ENCODE measurements at regions of chr5 and their contacts with region 1.

Region 1: DNA sequence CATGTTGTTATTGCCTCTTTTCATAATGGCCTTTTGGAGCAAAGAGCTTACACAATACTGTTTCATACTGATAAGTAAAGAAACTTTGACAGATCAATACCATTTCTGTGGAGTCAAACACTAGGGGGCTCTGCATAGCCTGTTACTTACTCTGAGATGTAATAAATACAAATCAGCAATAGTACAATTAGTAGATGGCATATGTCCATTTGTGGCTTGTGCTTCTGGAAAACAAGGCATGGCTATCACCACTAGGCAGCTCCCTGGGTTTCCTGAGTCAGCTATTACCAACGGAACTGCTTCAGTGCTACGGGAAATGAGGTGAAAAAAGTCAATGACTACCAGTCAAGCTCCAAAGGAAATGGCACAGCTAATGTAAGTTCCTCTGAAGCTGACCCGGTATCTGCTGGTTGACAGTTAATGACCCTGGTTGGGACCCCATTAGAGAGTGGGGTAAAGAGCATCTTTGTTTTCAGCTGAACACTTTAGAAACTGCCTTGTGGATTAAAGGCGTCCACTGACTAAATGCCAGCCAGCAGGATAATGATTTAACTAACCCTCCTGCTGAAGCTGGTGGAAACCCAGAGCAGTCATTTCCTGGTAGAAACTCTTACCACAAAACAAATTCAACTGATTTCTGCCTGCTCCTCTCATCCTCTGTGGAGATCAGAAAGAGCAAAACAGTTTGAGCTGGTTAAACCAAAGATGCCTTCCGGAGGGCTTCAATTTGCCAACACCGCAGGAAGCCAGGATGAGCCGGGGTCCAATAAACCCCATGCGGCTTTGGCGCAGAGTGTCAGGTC is 69.0 kb upstream of the FAM169A start:
- DNase-seq: peak in 8 of 9 donors; percentile 14 to 65 (median 44)
- ATAC-seq: peak; percentile 79
- H3K4me3 ChIP-seq: peak overlapping the region; percentile 34
- H3K4me3 Mint-ChIP-seq: peak overlapping the region; percentile 65 to 84 (median 76)
- H3K27ac ChIP-seq: peak overlapping the region; percentile 50
- H3K27ac Mint-ChIP-seq: peak overlapping the region; percentile 52 to 89 (median 85)
- H3K4me1 ChIP-seq: peaks cover 9 to 20% of the 10 kb centered on the region in 2 donors
- H3K4me1 Mint-ChIP-seq: peaks cover 13 to 50% (median 42%) of the 10 kb centered on the region in 7 donors
- H3K27me3 ChIP-seq: no peaks in the 10 kb centered on the region
- H3K27me3 Mint-ChIP-seq: peaks cover 0 to 6% (median 0%) of the 10 kb centered on the region in 5 donors

Region 2: DNA sequence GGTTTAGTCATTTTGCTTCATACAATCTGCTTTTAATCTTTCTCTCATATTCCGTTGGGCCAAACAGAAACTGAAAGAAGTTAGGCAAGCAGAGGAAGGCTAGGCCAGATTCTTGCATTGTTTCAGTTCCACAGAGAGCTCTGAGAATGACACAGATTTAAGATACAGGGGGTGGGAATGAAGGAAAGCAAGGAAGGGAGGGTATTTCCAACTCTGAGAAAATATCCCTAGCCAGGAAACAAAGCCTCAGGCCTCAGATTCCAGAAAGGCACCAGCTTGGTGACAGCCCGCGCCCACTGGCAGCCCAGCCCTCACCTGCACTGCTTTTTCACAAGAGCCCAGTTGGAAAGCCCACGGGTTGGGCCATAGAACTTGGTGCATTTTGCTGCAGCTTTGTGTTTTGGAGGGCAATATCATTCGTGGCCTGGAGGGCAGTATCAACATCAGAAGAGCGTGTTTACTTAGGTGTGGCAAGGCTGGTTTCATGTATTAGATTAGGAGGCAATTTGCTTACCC is 358.2 kb before region 1 on chr5:
- CTCF ChIA-PET with region 1: no interaction called
- POLR2A ChIA-PET with region 1: no interaction called
- intact Hi-C with region 1: loop called in 1 of 2 experiments (anchors 2 kb)
- DNase-seq: peak in 7 of 9 donors; percentile 6 to 43 (median 24)
- ATAC-seq: peak; percentile 41
- H3K4me3 ChIP-seq: peak overlapping the region; percentile 48
- H3K4me3 Mint-ChIP-seq: peak overlapping the region; percentile 41 to 92 (median 71)
- H3K27ac ChIP-seq: peak overlapping the region; percentile 8
- H3K27ac Mint-ChIP-seq: peak overlapping the region; percentile 51 to 97 (median 81)
- H3K4me1 ChIP-seq: peaks cover 21 to 22% of the 10 kb centered on the region in 2 donors
- H3K4me1 Mint-ChIP-seq: peaks cover 10 to 51% (median 30%) of the 10 kb centered on the region in 7 donors
- H3K27me3 ChIP-seq: no peaks in the 10 kb centered on the region
- H3K27me3 Mint-ChIP-seq: peaks cover 0 to 12% (median 0%) of the 10 kb centered on the region in 5 donors

Region 3: GRCh38 chr5:74916831-74917710 is 18.1 kb before region 1 on chr5:
- CTCF ChIA-PET with region 1: no interaction called
- POLR2A ChIA-PET with region 1: no interaction called
- intact Hi-C with region 1: no loop called
- DNase-seq: no peak
- ATAC-seq: no peak
- H3K4me3 ChIP-seq: no peak overlapping the region
- H3K4me3 Mint-ChIP-seq: no peak overlapping the region
- H3K27ac ChIP-seq: no peak overlapping the region
- H3K27ac Mint-ChIP-seq: no peak overlapping the region
- H3K4me1 ChIP-seq: no peaks in the 10 kb centered on the region
- H3K4me1 Mint-ChIP-seq: no peaks in the 10 kb centered on the region
- H3K27me3 ChIP-seq: no peaks in the 10 kb centered on the region
- H3K27me3 Mint-ChIP-seq: peaks cover 0 to 9% (median 5%) of the 10 kb centered on the region in 5 donors

Region 4: GRCh38 chr5:74974451-74975091 is 39.4 kb after region 1 on chr5:
- CTCF ChIA-PET with region 1: no interaction called
- POLR2A ChIA-PET with region 1: no interaction called
- intact Hi-C with region 1: loop called in 1 of 2 experiments (anchors 2 kb)
- DNase-seq: peak in 6 of 9 donors; percentile 16 to 46 (median 39)
- ATAC-seq: peak; percentile 76
- H3K4me3 ChIP-seq: no peak overlapping the region
- H3K4me3 Mint-ChIP-seq: peak overlapping the region in 8 of 10 donors; percentile 33 to 72 (median 54)
- H3K27ac ChIP-seq: no peak overlapping the region
- H3K27ac Mint-ChIP-seq: peak overlapping the region; percentile 51 to 93 (median 84)
- H3K4me1 ChIP-seq: peaks cover 13 to 36% of the 10 kb centered on the region in 2 donors
- H3K4me1 Mint-ChIP-seq: peaks cover 16 to 42% (median 31%) of the 10 kb centered on the region in 7 donors
- H3K27me3 ChIP-seq: no peaks in the 10 kb centered on the region
- H3K27me3 Mint-ChIP-seq: peaks cover 0 to 1% (median 0%) of the 10 kb centered on the region in 5 donors

Region 5: GRCh38 chr5:75034137-75034750 is 99.1 kb after region 1 on chr5:
- CTCF ChIA-PET with region 1: no interaction called
- POLR2A ChIA-PET with region 1: interaction called, 3 read pairs
- intact Hi-C with region 1: loop called in 1 of 2 experiments (anchors 1 kb)
- DNase-seq: peak in 7 of 9 donors; percentile 23 to 69 (median 52)
- ATAC-seq: peak; percentile 74
- H3K4me3 ChIP-seq: peak overlapping the region; percentile 10
- H3K4me3 Mint-ChIP-seq: peak overlapping the region; percentile 19 to 76 (median 62)
- H3K27ac ChIP-seq: peak overlapping the region; percentile 31
- H3K27ac Mint-ChIP-seq: peak overlapping the region in 8 of 9 donors; percentile 76 to 97 (median 82)
- H3K4me1 ChIP-seq: peaks cover 25 to 42% of the 10 kb centered on the region in 2 donors
- H3K4me1 Mint-ChIP-seq: peaks cover 22 to 94% (median 85%) of the 10 kb centered on the region in 7 donors
- H3K27me3 ChIP-seq: no peaks in the 10 kb centered on the region
- H3K27me3 Mint-ChIP-seq: no peaks in the 10 kb centered on the region

Region 6: GRCh38 chr5:75265731-75266130 is 330.6 kb after region 1 on chr5:
- CTCF ChIA-PET with region 1: interaction called, 5 read pairs
- POLR2A ChIA-PET with region 1: no interaction called
- intact Hi-C with region 1: loop called in 1 of 2 experiments (anchors 1 kb)
- DNase-seq: peak in 7 of 9 donors; percentile 27 to 65 (median 55)
- ATAC-seq: peak; percentile 75
- H3K4me3 ChIP-seq: no peak overlapping the region
- H3K4me3 Mint-ChIP-seq: no peak overlapping the region
- H3K27ac ChIP-seq: no peak overlapping the region
- H3K27ac Mint-ChIP-seq: peak overlapping the region in 1 of 9 donors; percentile 56
- H3K4me1 ChIP-seq: no peaks in the 10 kb centered on the region
- H3K4me1 Mint-ChIP-seq: peaks cover 0 to 5% (median 0%) of the 10 kb centered on the region in 7 donors
- H3K27me3 ChIP-seq: no peaks in the 10 kb centered on the region
- H3K27me3 Mint-ChIP-seq: peaks cover 0 to 11% (median 4%) of the 10 kb centered on the region in 5 donors